WTC11 (cell line): ENCODE measurements at regions of chr19 and their contacts with region 1.

Region 1: DNA sequence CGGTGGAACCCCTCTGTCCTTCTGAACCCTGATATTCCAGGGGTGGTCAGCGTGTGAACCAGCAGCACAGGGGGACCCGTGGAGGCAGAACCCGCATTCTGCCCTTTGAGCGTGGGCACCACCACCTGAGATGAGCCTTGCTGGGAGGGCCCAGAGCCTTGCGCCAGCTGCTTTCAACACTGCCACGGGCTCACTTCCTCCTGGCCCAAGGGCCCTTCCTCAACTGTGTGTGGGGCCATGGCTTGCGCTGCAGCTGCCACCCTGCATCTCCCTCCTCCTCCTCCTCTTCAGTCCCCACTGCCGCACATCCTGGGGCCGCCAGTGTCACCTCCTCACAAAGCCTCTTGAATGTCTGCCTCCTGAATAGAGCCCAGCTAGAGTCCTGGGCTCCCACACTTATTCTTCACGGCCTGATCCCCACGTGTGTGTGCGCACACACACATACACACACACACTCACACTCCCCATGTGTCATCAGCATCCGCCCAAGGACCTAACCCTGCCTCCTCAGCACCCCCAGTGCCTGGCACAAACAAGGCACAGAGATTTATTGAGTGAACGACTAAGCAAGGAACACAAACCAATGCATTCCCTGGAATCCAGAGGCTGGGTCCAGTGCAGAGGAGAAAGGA is 26.9 kb upstream of the TMEM160 start:
- DNase-seq: no peak
- ATAC-seq: no peak
- H3K4me3 Mint-ChIP-seq: no peak overlapping the region
- H3K27ac Mint-ChIP-seq: peak overlapping the region; percentile 61
- H3K4me1 Mint-ChIP-seq: no peaks in the 10 kb centered on the region
- H3K27me3 Mint-ChIP-seq: no peaks in the 10 kb centered on the region
- CTCF ChIP-seq: no peak

Region 2: GRCh38 chr19:47093841-47094240 is 18.5 kb after region 1 on chr19:
- CTCF ChIA-PET with region 1: interaction called, 15 read pairs
- POLR2A ChIA-PET with region 1: interaction called, 3 read pairs
- DNase-seq: no peak
- ATAC-seq: no peak
- H3K4me3 Mint-ChIP-seq: no peak overlapping the region
- H3K27ac Mint-ChIP-seq: peak overlapping the region; percentile 45; the same call in 1 of the 2 replicates
- H3K4me1 Mint-ChIP-seq: peaks cover 34% of the 10 kb centered on the region
- H3K27me3 Mint-ChIP-seq: no peaks in the 10 kb centered on the region
- CTCF ChIP-seq: no peak

Region 3: DNA sequence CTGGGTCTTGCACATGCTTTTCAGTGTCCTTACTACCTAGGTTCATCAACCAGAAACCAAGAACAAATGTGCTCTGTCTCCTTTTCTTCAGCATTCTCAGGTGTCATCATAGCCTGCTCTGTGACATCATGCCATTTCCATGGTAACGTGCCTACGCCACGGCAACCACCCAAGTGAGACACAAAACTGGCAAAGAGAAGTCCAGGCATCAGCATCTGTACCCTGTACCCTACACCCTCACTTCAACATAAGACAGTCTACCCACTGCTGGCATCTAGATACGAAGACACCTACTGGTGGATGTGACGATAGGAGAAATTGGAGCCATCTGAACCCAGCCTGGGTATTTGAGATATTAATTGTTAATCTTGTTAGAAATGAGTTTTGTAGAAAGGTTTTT is 25.0 kb after region 1 on chr19:
- CTCF ChIA-PET with region 1: interaction called, 15 read pairs
- POLR2A ChIA-PET with region 1: no interaction called
- DNase-seq: no peak
- ATAC-seq: no peak
- H3K4me3 Mint-ChIP-seq: no peak overlapping the region
- H3K27ac Mint-ChIP-seq: peak overlapping the region; percentile 61
- H3K4me1 Mint-ChIP-seq: peaks cover 51% of the 10 kb centered on the region
- H3K27me3 Mint-ChIP-seq: no peaks in the 10 kb centered on the region
- CTCF ChIP-seq: no peak

Region 4: GRCh38 chr19:47112997-47113849 is 37.9 kb after region 1 on chr19 and contains the start of gene ZC3H4:
- CTCF ChIA-PET with region 1: interaction called, 17 read pairs
- POLR2A ChIA-PET with region 1: interaction called, 6 read pairs
- DNase-seq: peak; percentile 100
- ATAC-seq: peak; percentile 94
- H3K4me3 Mint-ChIP-seq: peak within 1 kb of the TSS; percentile 91
- H3K27ac Mint-ChIP-seq: peak within 1 kb of the TSS; percentile 99
- H3K4me1 Mint-ChIP-seq: peaks cover 28% of the 10 kb centered on the region
- H3K27me3 Mint-ChIP-seq: no peaks in the 10 kb centered on the region
- CTCF ChIP-seq: no peak
- total RNA-seq, gene ZC3H4: 67.2 to 75.5 TPM (median 73.2 TPM) in 3 replicates

Region 5: GRCh38 chr19:47124937-47125668 is 49.8 kb after region 1 on chr19:
- CTCF ChIA-PET with region 1: interaction called, 16 read pairs
- POLR2A ChIA-PET with region 1: interaction called, 6 read pairs
- DNase-seq: no peak
- ATAC-seq: peak; percentile 93
- H3K4me3 Mint-ChIP-seq: no peak overlapping the region
- H3K27ac Mint-ChIP-seq: peak overlapping the region; percentile 69
- H3K4me1 Mint-ChIP-seq: peaks cover 6% of the 10 kb centered on the region
- H3K27me3 Mint-ChIP-seq: peaks cover 7% of the 10 kb centered on the region
- CTCF ChIP-seq: peak; percentile 55

Region 6: GRCh38 chr19:47130591-47131227 is 55.4 kb after region 1 on chr19 and contains the start of gene SAE1:
- CTCF ChIA-PET with region 1: interaction called, 16 read pairs
- POLR2A ChIA-PET with region 1: interaction called, 6 read pairs
- DNase-seq: peak; percentile 97
- ATAC-seq: peak; percentile 88
- H3K4me3 Mint-ChIP-seq: peak within 1 kb of the TSS; percentile 96
- H3K27ac Mint-ChIP-seq: peak within 1 kb of the TSS; percentile 95
- H3K4me1 Mint-ChIP-seq: peaks cover 38% of the 10 kb centered on the region
- H3K27me3 Mint-ChIP-seq: peaks cover 11% of the 10 kb centered on the region
- CTCF ChIP-seq: no peak
- total RNA-seq, gene SAE1: 215 to 224 TPM (median 221 TPM) in 3 replicates

Region 7: DNA sequence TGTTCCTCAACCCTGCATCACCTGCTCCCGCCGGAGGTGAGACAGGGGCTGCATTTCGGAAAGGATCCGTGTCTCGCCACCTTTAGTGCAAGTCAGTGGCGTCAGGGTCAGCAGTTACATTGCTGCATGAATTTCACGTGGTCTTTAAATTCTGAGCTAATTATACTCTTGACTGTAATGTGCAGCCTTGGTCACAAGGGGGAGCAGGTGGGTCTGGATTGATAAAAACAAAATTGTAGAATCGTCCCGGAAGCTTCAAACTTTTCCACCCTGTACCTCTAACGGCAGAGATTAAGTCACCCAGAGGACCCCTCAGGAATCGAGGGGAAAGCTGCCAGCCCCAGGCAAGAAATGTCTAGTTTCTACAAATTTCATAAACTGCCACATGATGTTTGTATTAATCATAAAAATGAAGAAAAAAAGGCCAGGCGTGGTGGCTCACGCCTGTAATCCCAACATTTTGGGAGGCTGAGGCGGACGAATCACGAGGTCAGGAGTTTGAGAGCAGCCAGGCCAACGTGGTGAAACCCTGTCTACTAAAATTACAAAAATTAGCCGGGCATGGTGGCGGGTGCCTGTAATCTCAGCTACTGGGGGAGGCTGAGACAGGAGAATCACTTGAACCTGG is 135.5 kb after region 1 on chr19:
- CTCF ChIA-PET with region 1: interaction called, 10 read pairs
- POLR2A ChIA-PET with region 1: no interaction called
- DNase-seq: peak; percentile 82
- ATAC-seq: peak; percentile 58
- H3K4me3 Mint-ChIP-seq: no peak overlapping the region
- H3K27ac Mint-ChIP-seq: peak overlapping the region; percentile 98
- H3K4me1 Mint-ChIP-seq: peaks cover 20% of the 10 kb centered on the region
- H3K27me3 Mint-ChIP-seq: no peaks in the 10 kb centered on the region
- CTCF ChIP-seq: peak; percentile 82